Activated naive CD4-positive, alpha-beta T cell treated with anti-CD3 and anti-CD28 coated beads for 36 hours (primary cell): ENCODE measurements at regions of chr18 and their contacts with region 1.

Region 1: DNA sequence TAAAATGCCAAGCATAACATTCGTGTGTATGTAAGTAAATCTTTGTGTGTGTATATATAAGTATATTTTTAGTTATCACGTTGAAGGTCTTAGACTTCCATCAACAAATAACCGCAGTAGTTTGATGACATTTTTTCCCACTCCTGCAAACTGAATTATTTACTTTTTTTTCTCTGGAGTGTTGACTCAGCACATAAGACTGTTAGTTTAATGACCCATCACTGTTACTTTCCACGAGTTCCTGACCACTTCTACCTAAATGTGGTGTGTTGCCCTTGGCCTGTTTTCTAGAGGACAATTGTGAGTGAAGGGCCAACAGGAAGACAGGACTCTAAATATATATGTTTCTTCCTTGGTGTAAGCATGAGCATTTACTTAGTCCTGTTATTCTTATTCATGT is 71.3 kb upstream of the TXNDC2 start:
- DNase-seq: no peak
- H3K4me3 Mint-ChIP-seq: no peak overlapping the region
- H3K27ac Mint-ChIP-seq: no peak overlapping the region
- H3K4me1 Mint-ChIP-seq: no peaks in the 10 kb centered on the region
- H3K27me3 Mint-ChIP-seq: peaks cover 8% of the 10 kb centered on the region

Region 2: GRCh38 chr18:9869715-9870430 is 55.4 kb after region 1 on chr18:
- CTCF ChIA-PET with region 1: no interaction called
- intact Hi-C with region 1: loop called (anchors 10 kb)
- DNase-seq: no peak
- H3K4me3 Mint-ChIP-seq: no peak overlapping the region
- H3K27ac Mint-ChIP-seq: no peak overlapping the region
- H3K4me1 Mint-ChIP-seq: no peaks in the 10 kb centered on the region
- H3K27me3 Mint-ChIP-seq: peaks cover 10% of the 10 kb centered on the region